ENCODE measurements at regions of chr7 and their contacts with region 1.

Region 1: DNA sequence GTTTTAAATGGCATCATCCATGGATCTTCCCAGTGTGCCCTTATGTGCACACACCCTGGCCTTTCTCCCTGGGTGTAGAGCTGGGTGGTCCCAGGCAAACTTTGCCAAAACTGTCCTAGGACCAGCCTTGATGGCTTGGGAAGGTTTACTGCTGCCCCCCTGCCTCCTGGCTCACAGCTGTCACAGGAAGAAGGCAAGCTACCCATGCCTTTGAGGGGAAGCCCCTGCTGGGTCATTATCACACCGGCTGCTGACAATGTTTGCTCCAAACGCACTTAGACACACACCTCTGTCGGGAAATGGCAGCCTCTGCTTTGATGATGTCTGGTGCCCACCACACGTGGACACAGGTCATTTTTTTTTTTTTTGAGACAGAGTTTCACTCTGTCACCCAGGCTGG is 25.2 kb upstream of the FIGNL1 start:
- DNase-seq: no peak
- H3K4me3 ChIP-seq: no peak overlapping the region
- H3K27ac ChIP-seq: no peak overlapping the region
- H3K4me1 ChIP-seq: no peaks in the 10 kb centered on the region
- H3K27me3 ChIP-seq: no peaks in the 10 kb centered on the region
- CTCF ChIP-seq: no peak

Region 2: GRCh38 chr7:50317221-50317678 is 158.1 kb before region 1 on chr7:
- intact Hi-C with region 1: no loop called
- DNase-seq: no peak
- H3K4me3 ChIP-seq: no peak overlapping the region
- H3K27ac ChIP-seq: peak overlapping the region; percentile 43
- H3K4me1 ChIP-seq: no peaks in the 10 kb centered on the region
- H3K27me3 ChIP-seq: no peaks in the 10 kb centered on the region
- CTCF ChIP-seq: no peak

Region 3: GRCh38 chr7:50335795-50336754 is 139.3 kb before region 1 on chr7:
- intact Hi-C with region 1: no loop called
- DNase-seq: no peak
- H3K4me3 ChIP-seq: no peak overlapping the region
- H3K27ac ChIP-seq: peak overlapping the region; percentile 22
- H3K4me1 ChIP-seq: no peaks in the 10 kb centered on the region
- H3K27me3 ChIP-seq: no peaks in the 10 kb centered on the region
- CTCF ChIP-seq: no peak

Region 4: DNA sequence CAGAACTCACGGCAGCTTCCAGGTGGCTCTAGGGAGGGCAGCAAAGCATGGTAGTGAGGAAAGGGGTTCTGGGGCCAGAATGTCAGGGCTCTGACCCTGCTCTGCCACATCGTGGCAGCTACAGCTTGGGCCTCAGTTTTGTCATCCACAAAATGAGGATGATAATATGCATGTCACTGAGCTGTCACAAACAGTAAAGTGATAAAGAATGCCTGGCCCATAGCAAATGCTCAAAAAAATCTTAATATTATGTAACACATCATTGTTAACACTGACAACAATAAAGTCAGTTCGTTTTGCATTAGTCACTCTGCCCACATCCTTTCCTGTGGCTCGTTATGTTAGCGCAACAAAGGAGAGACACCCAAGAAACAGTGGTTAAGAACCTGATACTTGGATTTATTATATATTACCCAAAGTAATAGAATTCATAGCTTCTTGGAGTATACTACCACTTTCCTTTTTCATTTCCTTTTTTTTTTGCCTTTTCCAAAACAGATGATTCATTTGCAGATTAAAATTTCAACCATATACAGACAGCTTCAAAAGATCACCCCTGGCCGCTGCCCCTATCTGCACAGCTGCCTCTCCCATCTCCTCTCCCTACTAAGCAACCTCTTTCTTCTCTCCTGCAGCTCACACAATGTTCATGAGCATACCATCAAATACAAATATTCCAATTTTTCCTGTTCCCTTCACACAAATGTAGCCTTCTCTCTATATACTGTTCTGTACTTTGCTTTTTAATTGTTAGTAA is 135.4 kb after region 1 on chr7:
- intact Hi-C with region 1: loop called (anchors 5 kb)
- DNase-seq: no peak
- H3K4me3 ChIP-seq: no peak overlapping the region
- H3K27ac ChIP-seq: no peak overlapping the region
- H3K4me1 ChIP-seq: no peaks in the 10 kb centered on the region
- H3K27me3 ChIP-seq: no peaks in the 10 kb centered on the region
- CTCF ChIP-seq: no peak

Region 5: DNA sequence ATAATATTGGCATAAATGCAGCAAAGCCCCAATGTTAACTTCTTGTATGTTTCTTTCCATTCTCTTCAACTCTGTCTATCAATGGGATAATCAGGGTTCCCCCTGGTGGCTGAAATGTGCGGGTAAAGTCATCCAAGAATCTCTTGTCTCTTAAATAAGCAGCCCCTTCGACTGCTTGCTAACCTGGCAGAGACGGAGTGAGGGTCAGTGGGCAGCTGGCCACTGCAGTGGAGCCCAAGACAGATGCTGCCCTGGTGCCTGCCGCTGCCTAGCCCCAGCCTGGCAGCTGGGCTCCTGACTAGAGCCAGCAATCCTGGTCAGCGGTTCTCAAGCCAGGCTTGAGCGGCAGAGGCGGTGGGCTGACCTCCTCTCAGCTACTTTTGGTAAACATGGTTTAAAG is 592.4 kb after region 1 on chr7:
- intact Hi-C with region 1: loop called (anchors 10 kb)
- DNase-seq: peak; percentile 72
- H3K4me3 ChIP-seq: no peak overlapping the region
- H3K27ac ChIP-seq: no peak overlapping the region
- H3K4me1 ChIP-seq: no peaks in the 10 kb centered on the region
- H3K27me3 ChIP-seq: no peaks in the 10 kb centered on the region
- CTCF ChIP-seq: peak; percentile 64

Region 6: DNA sequence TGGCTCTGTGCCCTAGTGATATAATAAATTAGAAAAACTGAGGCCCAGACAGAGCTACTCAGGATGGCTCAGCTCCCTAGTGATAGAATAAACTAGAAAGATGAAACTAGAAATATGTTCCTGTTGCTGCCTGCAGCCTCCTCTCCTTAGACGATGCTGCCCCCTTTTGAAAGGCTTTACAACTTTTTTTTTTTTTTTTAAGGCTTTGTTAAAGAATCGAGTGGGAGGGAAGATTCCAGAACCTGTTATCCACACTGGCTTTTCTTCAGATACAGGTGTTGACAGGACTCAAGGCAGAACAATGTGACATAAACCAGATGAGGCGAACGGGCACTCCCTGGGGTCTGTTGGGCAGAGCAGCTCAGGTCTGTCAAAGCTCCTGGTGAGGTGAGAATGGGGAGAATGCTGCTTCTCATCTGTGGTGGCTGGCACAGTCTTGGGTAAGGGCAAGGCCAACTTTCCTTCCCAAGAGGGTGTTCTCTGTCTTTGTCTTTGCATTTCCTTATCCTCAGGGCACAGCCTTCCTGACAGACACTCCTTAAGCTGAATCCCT is 666.2 kb after region 1 on chr7:
- intact Hi-C with region 1: loop called (anchors 5 kb)
- DNase-seq: no peak
- H3K4me3 ChIP-seq: no peak overlapping the region
- H3K27ac ChIP-seq: no peak overlapping the region
- H3K4me1 ChIP-seq: no peaks in the 10 kb centered on the region
- H3K27me3 ChIP-seq: no peaks in the 10 kb centered on the region
- CTCF ChIP-seq: peak; percentile 20

Region 7: DNA sequence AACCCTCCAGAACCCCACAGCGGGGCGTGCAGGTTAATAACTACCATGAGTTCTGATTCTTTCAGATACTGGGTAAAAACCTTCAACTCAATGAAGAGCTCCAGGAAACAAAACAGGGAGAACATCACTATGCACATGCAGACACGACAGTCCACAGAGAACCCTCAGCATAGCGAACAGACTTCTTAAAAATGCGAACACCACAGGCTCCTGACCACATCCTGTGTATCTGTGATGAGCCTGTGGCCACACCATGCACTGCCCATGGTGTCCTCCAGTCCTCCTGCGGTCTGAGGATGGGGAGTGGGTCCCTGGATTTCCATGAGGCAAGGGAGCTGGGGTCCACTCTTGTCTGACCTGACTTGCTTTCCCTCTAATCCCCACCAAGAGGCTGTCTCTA is 734.1 kb after region 1 on chr7:
- intact Hi-C with region 1: no loop called
- DNase-seq: no peak
- H3K4me3 ChIP-seq: no peak overlapping the region
- H3K27ac ChIP-seq: no peak overlapping the region
- H3K4me1 ChIP-seq: no peaks in the 10 kb centered on the region
- H3K27me3 ChIP-seq: no peaks in the 10 kb centered on the region
- CTCF ChIP-seq: no peak

Measured in colonic mucosa (tissue), 4 donors.